ENCODE measurements at regions of chr1 and their contacts with region 1.

Region 1: DNA sequence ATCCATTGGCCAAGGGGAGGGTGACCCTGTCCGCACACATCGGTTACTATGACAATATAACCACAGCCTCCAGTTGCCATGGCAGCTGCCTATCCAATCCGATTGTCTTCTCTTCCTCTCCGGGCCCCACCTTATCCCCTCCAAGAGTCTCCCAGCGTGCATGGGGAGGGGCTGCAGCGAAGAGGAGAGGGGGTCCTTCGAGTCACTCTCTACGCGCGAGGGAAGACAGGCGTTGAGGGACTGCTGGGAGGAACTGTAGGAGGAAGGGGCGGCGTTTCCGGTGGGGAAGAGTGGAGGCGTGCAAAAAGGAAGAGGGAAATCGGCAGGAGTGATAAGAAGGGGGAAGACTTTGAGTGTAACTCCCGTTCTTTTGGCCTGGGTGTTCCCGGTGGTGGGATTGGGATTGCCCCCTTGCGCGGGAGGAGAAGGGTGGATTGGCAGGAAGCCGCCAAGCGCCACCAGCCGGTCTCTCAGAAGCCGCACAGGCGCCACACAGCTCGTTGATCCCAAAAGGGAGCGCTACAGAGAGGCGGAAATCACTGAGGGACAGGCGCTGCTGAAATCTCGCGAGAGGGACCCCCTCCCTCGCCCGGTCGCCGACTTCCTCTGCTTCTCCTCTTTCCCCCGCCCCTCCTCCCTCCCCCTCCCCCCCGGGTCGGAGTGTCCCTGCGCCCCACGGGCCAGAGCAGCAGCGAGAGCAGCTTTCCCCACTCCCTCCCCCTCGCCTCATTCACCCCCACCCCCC is 384 bp upstream of the SMG7 start:
- DNase-seq: peak; percentile 98 to 99
- ATAC-seq: peak; percentile 84 to 93 (median 88)
- H3K4me3 ChIP-seq: peak overlapping the region; percentile 79 to 99 (median 96)
- H3K27ac ChIP-seq: peak overlapping the region; percentile 92 to 99 (median 96)
- H3K4me1 ChIP-seq: peaks cover 0 to 49% (median 41%) of the 10 kb centered on the region in 9 donors
- H3K27me3 ChIP-seq: no peaks in the 10 kb centered on the region
- CTCF ChIP-seq: peak in 5 of 9 donors; percentile 14 to 43 (median 25)

Region 2: DNA sequence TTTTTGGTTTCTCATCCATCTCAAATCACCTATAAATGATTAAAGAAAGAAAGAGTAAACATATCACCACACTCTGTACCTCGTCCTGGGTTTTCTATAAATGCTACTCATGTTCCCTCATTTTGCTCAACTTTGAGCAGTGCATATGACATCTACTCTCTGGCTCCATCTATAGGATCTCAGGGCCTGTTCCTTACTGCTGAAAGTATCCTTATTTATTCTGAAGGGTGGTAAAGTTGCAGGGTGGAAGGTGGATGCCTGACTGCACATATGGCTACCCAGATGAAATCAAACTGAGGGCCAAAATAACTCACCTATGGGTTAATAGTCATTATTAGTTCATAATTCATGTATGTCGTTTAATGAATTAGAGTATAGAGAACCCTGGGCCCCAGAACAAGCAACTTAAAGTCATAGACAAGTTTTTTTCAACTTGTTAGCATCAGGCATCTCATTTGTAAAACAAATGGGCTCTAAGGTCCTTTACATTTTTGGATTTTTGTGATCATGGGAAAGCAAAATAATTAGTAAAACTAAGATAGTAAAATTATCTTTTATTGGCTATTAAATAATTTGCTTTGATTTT is 71.8 kb after region 1 on chr1:
- intact Hi-C with region 1: loop called in 9 of 10 experiments (anchors 1 to 10 kb)
- DNase-seq: peak in 1 of 2 donors; percentile 20
- ATAC-seq: peak; percentile 72 to 83 (median 78)
- H3K4me3 ChIP-seq: no peak overlapping the region
- H3K27ac ChIP-seq: peak overlapping the region in 1 of 10 donors; percentile 54
- H3K4me1 ChIP-seq: peaks cover 0 to 43% (median 19%) of the 10 kb centered on the region in 9 donors
- H3K27me3 ChIP-seq: no peaks in the 10 kb centered on the region
- CTCF ChIP-seq: peak; percentile 16 to 73 (median 65)

Region 3: DNA sequence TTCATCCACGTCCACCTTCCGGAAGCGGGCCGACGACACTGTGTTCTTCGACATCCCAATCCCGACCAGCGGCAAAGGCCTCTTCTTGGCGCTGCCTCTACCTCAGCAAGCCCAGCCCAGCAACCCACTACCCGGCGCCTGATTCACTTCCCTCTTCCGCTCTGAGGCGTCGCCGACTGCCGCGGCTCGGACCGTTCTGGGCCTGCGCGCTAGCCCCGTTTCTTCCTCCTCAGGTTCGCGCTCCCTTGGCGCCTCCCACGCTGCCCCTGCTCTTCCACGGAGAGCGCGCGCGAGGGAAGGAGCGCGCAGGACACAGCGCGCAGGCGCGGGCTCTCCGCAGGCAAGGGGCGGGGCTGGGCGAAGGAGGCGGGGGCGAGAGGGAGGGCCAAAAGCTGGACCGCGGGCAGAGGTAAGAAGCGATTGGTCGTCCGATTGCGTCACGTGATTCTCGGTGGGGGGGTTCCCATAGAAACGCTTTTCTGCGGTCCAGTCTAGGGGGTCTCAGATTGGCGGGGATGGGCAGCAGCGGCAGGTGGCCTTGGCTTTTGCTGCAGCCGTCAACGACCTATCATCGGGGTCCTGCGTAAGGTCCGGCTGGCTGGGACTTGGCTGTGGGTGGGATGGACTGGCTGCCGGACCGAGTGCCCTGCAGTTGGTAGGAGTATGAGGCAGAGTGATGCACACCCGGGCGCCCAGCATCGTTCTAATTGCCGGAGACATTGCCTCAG is 163.9 kb after region 1 on chr1 and contains the start of gene ARPC5:
- intact Hi-C with region 1: loop called in 6 of 10 experiments (anchors 2 to 10 kb)
- DNase-seq: peak; percentile 96 to 98
- ATAC-seq: peak; percentile 95 to 98 (median 96)
- H3K4me3 ChIP-seq: peak within 1 kb of the TSS; percentile 67 to 92 (median 86)
- H3K27ac ChIP-seq: peak within 1 kb of the TSS; percentile 68 to 98 (median 94)
- H3K4me1 ChIP-seq: peaks cover 3 to 54% (median 42%) of the 10 kb centered on the region in 9 donors
- H3K27me3 ChIP-seq: no peaks in the 10 kb centered on the region
- CTCF ChIP-seq: no peak
- total RNA-seq, gene ARPC5: 23.8 to 60.2 (median 28.1) TPM